Endothelial cell of umbilical vein (primary cell): ENCODE measurements at regions of chr9 and their contacts with region 1.

Region 1: DNA sequence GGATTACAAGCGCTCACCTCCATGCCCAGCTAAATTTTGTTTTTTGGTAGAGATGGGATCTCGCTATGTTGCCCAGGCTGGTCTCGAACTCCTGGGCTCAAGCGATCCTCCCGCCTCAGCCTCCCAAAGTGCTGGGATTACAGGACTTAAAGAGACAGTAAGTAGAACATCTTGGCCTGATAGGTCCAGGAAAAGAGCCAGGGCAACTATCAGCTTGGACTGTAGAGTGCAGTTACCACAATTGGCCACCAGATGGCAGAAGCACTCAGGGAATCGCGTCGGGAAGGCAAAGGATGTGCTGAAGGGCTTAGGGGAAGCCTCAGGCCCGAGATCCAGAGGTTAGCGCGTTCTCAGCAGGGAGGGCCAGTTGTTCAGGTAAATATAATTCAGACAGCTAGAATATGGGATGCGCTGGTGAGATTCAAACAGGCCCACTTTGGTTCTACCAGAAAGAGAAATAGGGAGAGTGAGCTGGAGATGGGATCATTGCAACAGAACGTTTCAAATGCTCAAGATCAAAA is 21.5 kb downstream of the C9orf57 start:
- DNase-seq: peak; percentile 74
- H3K4me3 ChIP-seq: no peak overlapping the region
- H3K27ac ChIP-seq: no peak overlapping the region
- H3K4me1 ChIP-seq: no peaks in the 10 kb centered on the region
- H3K27me3 ChIP-seq: no peaks in the 10 kb centered on the region
- CTCF ChIP-seq: peak; percentile 85 to 91
- POLR2A ChIP-seq: no peak

Region 2: DNA sequence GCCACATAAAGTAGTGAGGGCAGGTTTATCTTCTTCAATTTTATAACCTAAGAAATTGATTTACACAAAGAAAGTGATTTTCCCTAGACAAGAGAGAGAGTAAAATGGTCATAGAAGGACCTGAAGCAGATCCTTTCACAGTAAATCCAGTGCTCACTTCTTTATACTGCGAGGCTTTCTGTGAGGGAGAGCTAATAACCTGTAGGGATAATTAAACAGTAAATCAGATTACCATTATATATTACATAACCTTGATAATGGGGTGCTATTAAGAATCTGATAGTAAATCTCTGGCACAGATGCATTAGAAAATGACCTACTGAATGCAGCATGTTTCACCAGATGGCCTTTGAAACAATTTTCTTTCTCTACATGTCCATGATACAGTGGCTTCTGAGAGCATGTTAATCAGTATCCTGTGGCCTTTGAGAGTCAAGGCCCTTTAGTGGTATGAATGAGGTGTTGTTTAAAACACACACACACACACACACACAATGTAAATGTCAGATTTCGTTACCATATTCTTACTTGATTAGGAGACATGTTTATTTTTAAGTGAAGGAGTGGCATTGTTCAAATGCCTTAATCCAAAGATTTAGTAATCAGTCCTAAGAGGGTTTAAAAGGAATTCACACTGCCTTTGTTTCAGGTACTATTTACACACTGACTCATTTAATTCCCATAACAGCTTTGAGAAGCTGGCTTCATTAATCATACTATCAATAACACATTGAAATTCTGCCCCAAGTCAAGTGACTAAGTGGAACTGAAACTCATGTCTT is 789.2 kb after region 1 on chr9:
- CTCF ChIA-PET with region 1: interaction called, 52 read pairs
- POLR2A ChIA-PET with region 1: interaction called, 3 read pairs
- dilution Hi-C with region 1: no loop called
- intact Hi-C with region 1: no loop called
- DNase-seq: peak; percentile 42
- H3K4me3 ChIP-seq: no peak overlapping the region
- H3K27ac ChIP-seq: no peak overlapping the region
- H3K4me1 ChIP-seq: peaks cover 4% of the 10 kb centered on the region
- H3K27me3 ChIP-seq: no peaks in the 10 kb centered on the region
- CTCF ChIP-seq: no peak
- POLR2A ChIP-seq: no peak

Region 3: GRCh38 chr9:73081979-73082657 is 1043.2 kb after region 1 on chr9:
- CTCF ChIA-PET with region 1: interaction called, 7 read pairs
- POLR2A ChIA-PET with region 1: no interaction called
- dilution Hi-C with region 1: no loop called
- intact Hi-C with region 1: loop called (anchors 2 kb)
- DNase-seq: peak; percentile 90
- H3K4me3 ChIP-seq: no peak overlapping the region
- H3K27ac ChIP-seq: no peak overlapping the region
- H3K4me1 ChIP-seq: peaks cover 2% of the 10 kb centered on the region
- H3K27me3 ChIP-seq: no peaks in the 10 kb centered on the region
- CTCF ChIP-seq: peak; percentile 61 to 74
- POLR2A ChIP-seq: no peak